ENCODE measurements at regions of chr20 and their contacts with region 1.

Region 1: GRCh38 chr20:49534255-49534712 is 33.7 kb downstream of the PTGIS start:
- DNase-seq: peak; percentile 36
- H3K4me3 ChIP-seq: no peak overlapping the region
- H3K27ac ChIP-seq: no peak overlapping the region
- H3K4me1 ChIP-seq: peaks cover 4% of the 10 kb centered on the region
- H3K27me3 ChIP-seq: no peaks in the 10 kb centered on the region
- CTCF ChIP-seq: peak; percentile 71 to 78

Region 2: GRCh38 chr20:49132995-49133478 is 401.2 kb before region 1 on chr20:
- CTCF ChIA-PET with region 1: no interaction called
- dilution Hi-C with region 1: no loop called
- in situ Hi-C with region 1: no loop called
- intact Hi-C with region 1: loop called (anchors 10 kb)
- DNase-seq: peak; percentile 45
- H3K4me3 ChIP-seq: no peak overlapping the region
- H3K27ac ChIP-seq: no peak overlapping the region
- H3K4me1 ChIP-seq: no peaks in the 10 kb centered on the region
- H3K27me3 ChIP-seq: no peaks in the 10 kb centered on the region
- CTCF ChIP-seq: peak; percentile 37 to 53

Region 3: DNA sequence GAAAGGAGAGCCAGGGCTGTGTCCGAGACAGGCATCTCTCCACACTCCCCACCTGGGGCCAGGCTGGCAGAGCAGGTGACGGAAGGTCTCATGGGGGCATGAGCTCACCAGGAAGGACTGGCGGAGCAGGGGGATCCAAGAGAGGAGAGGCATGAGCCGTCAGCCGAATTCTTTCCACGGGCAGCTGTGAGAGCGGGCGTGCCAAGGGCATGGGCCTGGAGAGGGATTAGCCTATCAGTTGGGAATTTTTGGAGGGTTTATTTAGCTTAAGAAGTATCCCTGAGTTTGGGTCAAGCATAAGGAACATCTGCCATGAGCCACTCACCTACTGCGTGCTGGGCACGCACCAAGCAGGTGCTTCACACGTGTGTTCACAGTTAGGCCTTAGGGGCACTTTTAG is 196.2 kb before region 1 on chr20:
- CTCF ChIA-PET with region 1: no interaction called
- dilution Hi-C with region 1: no loop called
- in situ Hi-C with region 1: loop called (anchors 10 kb)
- intact Hi-C with region 1: loop called (anchors 1 kb)
- DNase-seq: no peak
- H3K4me3 ChIP-seq: no peak overlapping the region
- H3K27ac ChIP-seq: no peak overlapping the region
- H3K4me1 ChIP-seq: no peaks in the 10 kb centered on the region
- H3K27me3 ChIP-seq: no peaks in the 10 kb centered on the region
- CTCF ChIP-seq: no peak

Region 4: DNA sequence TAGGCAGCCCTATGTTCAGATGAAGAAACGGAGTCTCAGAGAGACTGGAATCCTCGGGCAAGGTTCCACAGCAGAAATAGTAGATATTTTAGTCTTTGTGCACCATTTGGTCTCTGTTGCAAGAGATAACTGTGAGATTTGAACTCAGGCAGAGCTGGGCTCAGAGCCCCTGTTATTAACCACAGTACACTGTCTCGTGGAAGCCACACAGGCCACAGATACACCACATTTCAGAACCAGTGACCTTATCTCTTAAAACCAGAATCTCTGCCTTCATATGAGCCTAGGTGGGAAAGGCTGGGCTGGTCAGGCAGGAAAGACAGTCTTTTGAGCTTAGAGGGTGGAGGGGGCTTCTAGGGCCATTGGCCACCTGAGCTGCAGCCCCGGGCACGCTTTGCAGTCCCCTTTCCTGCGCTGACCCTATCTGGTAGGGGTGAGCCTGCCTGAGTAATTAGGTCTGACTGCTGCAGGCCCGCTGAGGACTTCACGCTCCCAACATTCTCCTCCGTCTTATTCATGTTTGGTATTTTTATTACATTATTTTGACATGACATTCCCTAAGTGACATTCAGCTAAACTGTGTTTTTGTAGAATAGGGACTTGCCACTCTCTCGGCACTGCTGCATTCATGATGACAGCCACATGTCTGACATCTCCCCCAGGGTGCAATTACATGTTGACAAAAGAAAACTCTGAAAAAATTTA is 122.9 kb before region 1 on chr20:
- CTCF ChIA-PET with region 1: no interaction called
- dilution Hi-C with region 1: no loop called
- in situ Hi-C with region 1: no loop called
- intact Hi-C with region 1: no loop called
- DNase-seq: no peak
- H3K4me3 ChIP-seq: no peak overlapping the region
- H3K27ac ChIP-seq: no peak overlapping the region
- H3K4me1 ChIP-seq: no peaks in the 10 kb centered on the region
- H3K27me3 ChIP-seq: peaks cover 3% of the 10 kb centered on the region
- CTCF ChIP-seq: no peak

Region 5: DNA sequence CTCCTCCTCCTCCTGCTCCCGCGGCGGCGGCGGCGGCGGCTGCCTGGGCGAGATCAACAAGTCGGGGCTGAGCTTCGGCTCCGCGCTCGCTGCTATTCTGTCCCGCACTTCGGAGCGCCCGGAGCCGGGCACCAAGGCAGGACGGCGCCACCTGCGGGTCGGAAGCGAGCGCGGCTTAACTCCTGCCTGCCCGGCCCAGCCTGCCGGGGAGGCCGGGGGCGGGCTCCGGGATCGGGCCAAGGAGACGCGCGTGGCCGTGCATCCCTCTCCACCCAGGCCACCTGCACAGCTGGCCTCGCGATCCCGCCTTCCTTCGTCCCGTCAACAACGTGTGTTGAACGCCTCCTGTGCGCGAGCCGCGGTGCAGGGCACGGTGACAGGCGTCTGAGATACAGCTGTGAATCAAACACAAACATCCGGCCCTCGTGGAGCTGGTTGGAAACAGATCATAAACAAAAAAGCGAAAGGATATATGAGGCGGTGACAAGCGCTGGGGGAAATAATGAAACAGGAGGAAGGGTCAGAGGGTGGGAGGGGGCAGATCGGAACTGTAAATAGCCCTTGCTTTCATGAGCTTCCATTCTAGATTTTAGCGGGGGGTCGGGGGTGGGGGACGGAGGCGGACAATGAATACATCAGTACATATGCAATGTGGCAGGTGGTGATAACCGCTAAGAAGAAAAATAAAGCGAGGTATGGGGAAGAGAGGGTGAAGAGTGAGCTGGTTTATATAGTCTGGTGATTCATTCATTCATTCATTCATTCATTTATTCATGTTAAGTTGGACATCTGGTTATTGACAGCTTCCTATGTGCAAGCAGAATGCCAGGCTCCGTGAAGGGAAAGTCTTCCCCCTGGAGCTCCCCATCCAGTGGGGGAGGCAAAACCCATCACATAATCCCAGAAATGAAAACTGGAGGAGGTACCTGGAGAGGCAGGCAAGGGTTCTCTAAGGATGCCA is 49.8 kb before region 1 on chr20:
- CTCF ChIA-PET with region 1: interaction called, 3 read pairs
- dilution Hi-C with region 1: no loop called
- in situ Hi-C with region 1: no loop called
- intact Hi-C with region 1: loop called (anchors 1 kb)
- DNase-seq: peak; percentile 73
- H3K4me3 ChIP-seq: peak overlapping the region; percentile 11 to 49 (median 41)
- H3K27ac ChIP-seq: no peak overlapping the region
- H3K4me1 ChIP-seq: peaks cover 6% of the 10 kb centered on the region
- H3K27me3 ChIP-seq: peaks cover 4% of the 10 kb centered on the region
- CTCF ChIP-seq: peak; percentile 48 to 84

Region 6: DNA sequence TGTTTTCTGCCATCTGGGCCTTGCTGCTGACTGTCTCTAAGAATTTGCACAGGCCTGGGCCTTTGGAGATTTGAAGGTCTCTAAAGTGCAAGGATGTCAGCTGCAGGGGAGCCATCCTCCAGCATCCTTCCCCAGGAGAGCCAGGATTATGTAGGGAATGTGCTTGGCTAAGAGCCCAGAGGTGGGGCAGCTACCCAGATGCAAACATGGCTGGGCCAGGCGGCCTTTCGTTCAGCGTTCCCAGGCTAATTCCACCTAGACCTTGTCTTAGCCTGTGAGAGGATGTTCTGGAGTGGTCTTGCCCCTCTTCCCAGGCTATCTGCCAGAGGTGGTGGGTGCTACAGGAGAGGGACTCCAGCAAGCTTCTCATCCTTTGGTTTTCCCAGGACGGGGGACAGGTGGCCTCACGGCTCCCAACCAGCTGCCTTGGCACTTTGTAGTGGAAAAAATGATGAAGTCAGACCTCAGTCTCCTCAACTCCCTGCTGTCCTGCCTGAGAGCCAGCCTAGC is 41.3 kb after region 1 on chr20:
- CTCF ChIA-PET with region 1: no interaction called
- dilution Hi-C with region 1: loop called (anchors 5 kb)
- in situ Hi-C with region 1: no loop called
- intact Hi-C with region 1: no loop called
- DNase-seq: no peak
- H3K4me3 ChIP-seq: no peak overlapping the region
- H3K27ac ChIP-seq: no peak overlapping the region
- H3K4me1 ChIP-seq: no peaks in the 10 kb centered on the region
- H3K27me3 ChIP-seq: no peaks in the 10 kb centered on the region
- CTCF ChIP-seq: no peak